ENCODE measurements at regions of chr7 and their contacts with region 1.

Region 1: DNA sequence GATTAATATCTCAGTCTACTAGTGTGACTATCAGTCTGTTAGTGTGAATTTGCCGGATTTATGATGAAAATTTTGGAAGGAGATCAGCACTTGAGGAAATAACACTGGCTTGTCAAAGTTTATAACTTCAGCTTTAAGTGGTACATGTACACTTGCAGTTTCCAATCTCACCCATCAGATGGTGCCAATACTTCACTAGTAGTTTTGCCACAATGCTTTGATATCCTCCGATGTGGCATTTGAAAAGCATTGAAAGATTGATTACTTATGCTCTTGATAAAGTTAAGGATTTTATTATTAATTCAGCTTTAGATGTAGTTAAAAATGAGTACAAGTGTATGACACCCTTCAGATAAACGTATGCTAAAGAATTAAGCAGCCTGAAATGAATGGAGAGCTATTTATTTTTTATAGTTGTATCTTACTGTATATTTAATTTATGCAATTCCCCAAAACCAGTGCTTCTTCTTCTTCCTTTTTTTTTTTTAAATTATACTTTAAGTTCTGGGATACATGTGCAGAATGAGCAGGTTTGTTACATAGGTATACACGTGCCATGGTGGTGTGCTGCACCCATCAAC is 98.2 kb downstream of the ANLN start:
- DNase-seq: peak; percentile 63
- H3K4me3 ChIP-seq: no peak overlapping the region; a peak in 1 of 4 replicates
- H3K27ac ChIP-seq: no peak overlapping the region
- H3K4me1 ChIP-seq: 0 out of 4 replicates have a peak, but pooled peaks cover 0 to 2% of the 10 kb centered on the region in 2 experiments
- H3K27me3 ChIP-seq: no peaks in the 10 kb centered on the region
- CTCF ChIP-seq: peak; percentile 99
- EP300 ChIP-seq: peak in 1 of 2 experiments; percentile 14; a peak in 1 of 4 replicates
- RAD21 ChIP-seq: peak; percentile 100

Region 2: GRCh38 chr7:36468370-36469101 is 19.3 kb before region 1 on chr7:
- CTCF ChIA-PET with region 1: interaction called, 24 read pairs
- POLR2A ChIA-PET with region 1: no interaction called
- DNase-seq: no peak
- H3K4me3 ChIP-seq: no peak overlapping the region
- H3K27ac ChIP-seq: peak overlapping the region; percentile 45 to 55
- H3K4me1 ChIP-seq: peaks cover 12 to 14% of the 10 kb centered on the region in 2 experiments
- H3K27me3 ChIP-seq: no peaks in the 10 kb centered on the region
- CTCF ChIP-seq: no peak
- EP300 ChIP-seq: peak in 1 of 2 experiments; percentile 26; a peak in 1 of 4 replicates
- RAD21 ChIP-seq: no peak

Region 3: GRCh38 chr7:36605261-36606051 is 117.6 kb after region 1 on chr7:
- CTCF ChIA-PET with region 1: interaction called, 15 read pairs
- POLR2A ChIA-PET with region 1: no interaction called
- DNase-seq: no peak
- H3K4me3 ChIP-seq: no peak overlapping the region
- H3K27ac ChIP-seq: no peak overlapping the region
- H3K4me1 ChIP-seq: peaks cover 0 to 17% of the 10 kb centered on the region in 2 experiments; a peak in 1 of 4 replicates
- H3K27me3 ChIP-seq: no peaks in the 10 kb centered on the region; the same call in 1 of the 2 replicates
- CTCF ChIP-seq: no peak
- EP300 ChIP-seq: no peak
- RAD21 ChIP-seq: no peak

Region 4: GRCh38 chr7:36690514-36691187 is 202.8 kb after region 1 on chr7:
- CTCF ChIA-PET with region 1: interaction called, 13 read pairs
- POLR2A ChIA-PET with region 1: no interaction called
- DNase-seq: peak; percentile 53
- H3K4me3 ChIP-seq: no peak overlapping the region
- H3K27ac ChIP-seq: peak overlapping the region in 1 of 2 experiments; percentile 91; a peak in 2 of 4 replicates
- H3K4me1 ChIP-seq: peaks cover 0 to 25% of the 10 kb centered on the region in 2 experiments; a peak in 2 of 4 replicates
- H3K27me3 ChIP-seq: no peaks in the 10 kb centered on the region
- CTCF ChIP-seq: no peak
- EP300 ChIP-seq: peak in 1 of 2 experiments; percentile 88; a peak in 2 of 4 replicates
- RAD21 ChIP-seq: no peak; the same call in 1 of the 2 replicates

Region 5: DNA sequence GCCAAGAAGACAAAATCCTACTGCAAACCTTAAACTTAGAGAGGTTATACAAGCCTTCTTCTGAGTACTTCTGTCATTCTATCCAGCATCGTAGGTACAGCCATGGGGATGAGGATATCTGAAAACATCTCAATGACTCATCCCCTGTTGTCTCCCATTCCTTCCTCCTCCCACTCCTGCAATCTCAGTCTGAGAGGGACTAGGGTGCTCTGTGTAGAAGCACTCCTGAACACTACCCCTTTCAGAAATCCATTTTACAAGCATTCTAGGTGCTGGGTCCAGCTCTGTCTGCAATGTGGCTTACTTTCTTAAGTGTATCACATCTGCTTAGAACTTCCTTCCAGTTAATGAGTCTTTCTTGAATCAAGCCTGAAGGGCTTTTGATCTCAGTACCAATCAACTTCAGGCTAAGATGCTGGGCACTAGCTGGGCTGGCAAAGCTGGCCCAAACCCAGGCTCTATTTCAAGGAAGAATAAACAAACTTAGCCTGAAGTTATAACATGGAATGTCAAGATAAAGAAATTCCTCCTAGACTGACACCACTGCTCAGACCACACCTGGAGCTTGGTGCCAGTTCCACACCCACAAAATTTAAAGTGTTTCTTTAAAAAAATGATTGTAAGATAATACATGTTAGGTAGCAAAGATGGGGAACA is 506.7 kb after region 1 on chr7:
- CTCF ChIA-PET with region 1: interaction called, 162 read pairs
- POLR2A ChIA-PET with region 1: no interaction called
- DNase-seq: no peak
- H3K4me3 ChIP-seq: no peak overlapping the region
- H3K27ac ChIP-seq: no peak overlapping the region
- H3K4me1 ChIP-seq: peaks cover 0 to 2% of the 10 kb centered on the region in 2 experiments; a peak in 1 of 4 replicates
- H3K27me3 ChIP-seq: no peaks in the 10 kb centered on the region
- CTCF ChIP-seq: no peak
- EP300 ChIP-seq: no peak
- RAD21 ChIP-seq: no peak

Region 6: DNA sequence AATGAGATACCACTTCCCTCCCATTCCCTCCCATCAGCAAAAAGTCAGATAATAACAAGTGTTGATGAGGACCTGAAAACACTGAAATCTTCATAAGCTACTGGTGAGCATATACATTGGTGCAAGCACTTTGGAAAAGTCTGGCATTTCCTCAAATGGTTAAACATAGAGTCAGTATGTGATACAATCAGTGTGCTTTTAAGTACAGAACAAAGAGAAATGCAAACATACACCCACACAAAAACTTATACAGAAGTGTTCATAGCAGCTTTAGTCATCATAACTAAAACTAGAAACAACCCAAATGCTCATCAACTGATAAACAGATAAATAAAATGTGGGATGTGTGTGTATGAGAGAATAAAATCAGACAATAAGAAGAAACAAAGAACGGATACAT is 698.9 kb after region 1 on chr7:
- CTCF ChIA-PET with region 1: interaction called, 303 read pairs
- POLR2A ChIA-PET with region 1: interaction called, 4 read pairs
- DNase-seq: no peak
- H3K4me3 ChIP-seq: no peak overlapping the region
- H3K27ac ChIP-seq: no peak overlapping the region
- H3K4me1 ChIP-seq: no peaks in the 10 kb centered on the region; a peak in 1 of 4 replicates
- H3K27me3 ChIP-seq: no peaks in the 10 kb centered on the region
- CTCF ChIP-seq: no peak
- EP300 ChIP-seq: no peak
- RAD21 ChIP-seq: no peak

Region 7: GRCh38 chr7:37709631-37710509 is 1222.0 kb after region 1 on chr7:
- CTCF ChIA-PET with region 1: no interaction called
- POLR2A ChIA-PET with region 1: no interaction called
- DNase-seq: no peak
- H3K4me3 ChIP-seq: no peak overlapping the region
- H3K27ac ChIP-seq: no peak overlapping the region
- H3K4me1 ChIP-seq: no peaks in the 10 kb centered on the region
- H3K27me3 ChIP-seq: no peaks in the 10 kb centered on the region
- CTCF ChIP-seq: no peak
- EP300 ChIP-seq: no peak
- RAD21 ChIP-seq: no peak

Measured in SK-N-SH (cell line).